Calu3 (cell line): ENCODE measurements at regions of chr12 and their contacts with region 1.

Region 1: GRCh38 chr12:75366629-75367028 is 24.3 kb upstream of the GLIPR1L2 start:
- DNase-seq: no peak
- H3K4me3 Mint-ChIP-seq: no peak overlapping the region
- H3K27ac Mint-ChIP-seq: no peak overlapping the region
- H3K4me1 Mint-ChIP-seq: peaks cover 10% of the 10 kb centered on the region
- H3K27me3 Mint-ChIP-seq: no peaks in the 10 kb centered on the region
- CTCF ChIP-seq: no peak

Region 2: DNA sequence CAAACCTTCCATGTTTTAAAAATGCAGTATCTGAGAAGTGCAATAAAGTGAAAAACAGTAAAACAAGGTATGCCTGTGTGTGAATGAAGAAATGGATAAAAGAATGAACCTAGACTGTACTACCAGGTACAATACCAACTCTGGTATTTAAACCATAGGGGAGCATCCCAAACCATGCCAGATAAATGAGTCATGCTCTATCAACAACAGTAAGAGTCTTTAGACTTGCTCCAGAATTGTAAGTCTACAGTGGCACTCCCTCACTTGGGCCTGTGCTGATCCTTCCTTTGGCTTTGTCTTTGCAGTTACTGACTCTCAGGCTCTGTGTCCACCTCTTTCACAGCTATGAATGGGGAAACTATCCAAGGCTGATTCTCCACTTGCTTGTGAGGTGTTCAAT is 943.5 kb after region 1 on chr12:
- CTCF ChIA-PET with region 1: interaction called, 10 read pairs
- intact Hi-C with region 1: no loop called
- DNase-seq: no peak
- H3K4me3 Mint-ChIP-seq: no peak overlapping the region
- H3K27ac Mint-ChIP-seq: no peak overlapping the region
- H3K4me1 Mint-ChIP-seq: no peaks in the 10 kb centered on the region
- H3K27me3 Mint-ChIP-seq: no peaks in the 10 kb centered on the region
- CTCF ChIP-seq: no peak